ENCODE measurements at regions of chr10 and their contacts with region 1.

Region 1: GRCh38 chr10:80924063-80924952 is 386.6 kb downstream of the SH2D4B start:
- DNase-seq: peak; percentile 2 to 77
- H3K4me3 ChIP-seq: no peak overlapping the region
- H3K27ac ChIP-seq: no peak overlapping the region
- H3K4me1 ChIP-seq: peaks cover 0 to 10% (median 5%) of the 10 kb centered on the region in 4 experiments; a peak in 5 of 7 replicates
- H3K27me3 ChIP-seq: no peaks in the 10 kb centered on the region
- CTCF ChIP-seq: peak; percentile 33 to 73 (median 73)
- EP300 ChIP-seq: no peak
- POLR2A ChIP-seq: no peak
- RAD21 ChIP-seq: peak; percentile 74 to 79

Region 2: GRCh38 chr10:80699602-80700039 is 224.7 kb before region 1 on chr10:
- CTCF ChIA-PET with region 1: interaction called, 73 read pairs
- POLR2A ChIA-PET with region 1: no interaction called
- DNase-seq: peak; percentile 73 to 96
- H3K4me3 ChIP-seq: no peak overlapping the region
- H3K27ac ChIP-seq: no peak overlapping the region
- H3K4me1 ChIP-seq: no peaks in the 10 kb centered on the region; a peak in 1 of 7 replicates
- H3K27me3 ChIP-seq: no peaks in the 10 kb centered on the region
- CTCF ChIP-seq: peak; percentile 93 to 96 (median 94)
- EP300 ChIP-seq: no peak
- POLR2A ChIP-seq: no peak
- RAD21 ChIP-seq: peak; percentile 95 to 97

Region 3: DNA sequence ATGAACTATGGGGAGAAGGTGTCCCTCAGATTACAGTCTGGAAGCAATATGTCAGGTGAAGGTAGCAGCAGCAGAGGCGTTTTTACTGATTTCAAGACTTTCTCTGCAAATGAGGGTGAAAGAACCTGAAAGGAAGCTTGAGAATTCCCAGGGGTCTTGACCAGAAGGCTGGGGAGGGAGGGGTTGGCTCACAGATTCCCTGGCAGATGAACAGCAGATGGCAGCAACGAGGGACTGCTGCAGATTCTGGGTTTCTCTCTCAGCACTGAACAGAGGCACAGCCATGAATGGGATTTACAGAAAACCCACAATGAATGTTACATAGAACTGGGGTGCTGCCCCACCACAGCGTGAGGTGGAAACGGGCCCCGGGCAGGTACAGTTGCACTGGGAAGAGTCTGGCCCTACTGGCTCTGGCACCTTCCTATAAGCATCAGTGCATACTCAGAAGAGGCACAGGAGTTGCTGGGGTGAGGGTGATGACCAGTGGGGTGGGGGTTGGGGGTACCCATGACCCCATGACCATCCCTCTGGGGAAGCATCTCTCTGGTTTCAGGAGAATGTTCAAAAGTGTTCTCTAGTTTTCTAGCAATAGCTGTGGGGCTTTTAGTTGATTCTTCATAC is 68.8 kb before region 1 on chr10:
- CTCF ChIA-PET with region 1: interaction called, 85 read pairs
- POLR2A ChIA-PET with region 1: interaction called, 3 read pairs
- DNase-seq: peak; percentile 53 to 77
- H3K4me3 ChIP-seq: no peak overlapping the region
- H3K27ac ChIP-seq: no peak overlapping the region
- H3K4me1 ChIP-seq: no peaks in the 10 kb centered on the region; a peak in 3 of 7 replicates
- H3K27me3 ChIP-seq: no peaks in the 10 kb centered on the region
- CTCF ChIP-seq: peak; percentile 78 to 83 (median 78)
- EP300 ChIP-seq: no peak
- POLR2A ChIP-seq: no peak
- RAD21 ChIP-seq: peak; percentile 74 to 80

Region 4: DNA sequence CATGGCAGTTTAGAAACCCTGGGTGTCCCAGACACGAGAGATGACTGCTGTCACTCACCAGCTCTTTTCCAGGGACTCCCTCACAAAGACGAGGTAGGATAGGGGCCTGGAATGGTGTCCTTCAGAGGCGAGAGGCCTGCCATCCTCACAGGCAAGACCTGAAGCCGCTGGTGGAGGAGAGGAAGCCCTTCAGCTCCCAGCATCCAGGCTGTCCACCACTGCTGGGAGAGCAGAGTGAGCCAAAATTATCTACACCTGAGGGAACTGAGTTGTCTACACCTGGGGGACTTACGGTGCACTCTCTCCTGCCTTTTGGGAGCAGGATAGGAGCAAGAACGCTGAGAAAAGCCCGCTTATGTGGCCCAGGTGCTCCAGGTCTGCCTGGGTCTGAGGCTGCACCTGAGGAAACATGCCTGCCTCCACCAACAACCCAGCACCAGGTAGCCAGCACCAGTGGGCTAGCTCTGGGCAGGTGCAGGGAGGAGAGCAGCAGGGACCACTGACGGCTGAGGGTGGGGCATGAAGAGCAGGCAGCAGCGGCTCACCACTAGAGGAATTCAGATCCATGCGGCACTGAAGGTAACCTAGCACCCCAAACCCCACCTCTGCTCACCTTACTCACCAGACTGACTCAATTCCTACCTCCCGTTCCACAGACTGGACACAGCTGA is 29.4 kb before region 1 on chr10:
- CTCF ChIA-PET with region 1: interaction called, 38 read pairs
- POLR2A ChIA-PET with region 1: interaction called, 3 read pairs
- DNase-seq: peak in 1 of 2 experiments; percentile 71
- H3K4me3 ChIP-seq: peak overlapping the region in 3 of 4 experiments; percentile 0 to 31 (median 11); a peak in 4 of 8 replicates
- H3K27ac ChIP-seq: no peak overlapping the region
- H3K4me1 ChIP-seq: peaks cover 9 to 18% (median 12%) of the 10 kb centered on the region in 4 experiments
- H3K27me3 ChIP-seq: peaks cover 11 to 58% (median 42%) of the 10 kb centered on the region in 4 experiments
- CTCF ChIP-seq: no peak
- EP300 ChIP-seq: no peak
- POLR2A ChIP-seq: no peak
- RAD21 ChIP-seq: no peak

Region 5: GRCh38 chr10:80909254-80909653 is 15.1 kb before region 1 on chr10:
- CTCF ChIA-PET with region 1: interaction called, 62 read pairs
- POLR2A ChIA-PET with region 1: no interaction called
- DNase-seq: no peak
- H3K4me3 ChIP-seq: no peak overlapping the region
- H3K27ac ChIP-seq: no peak overlapping the region
- H3K4me1 ChIP-seq: no peaks in the 10 kb centered on the region
- H3K27me3 ChIP-seq: no peaks in the 10 kb centered on the region
- CTCF ChIP-seq: no peak
- EP300 ChIP-seq: no peak
- POLR2A ChIP-seq: no peak
- RAD21 ChIP-seq: no peak

Region 6: DNA sequence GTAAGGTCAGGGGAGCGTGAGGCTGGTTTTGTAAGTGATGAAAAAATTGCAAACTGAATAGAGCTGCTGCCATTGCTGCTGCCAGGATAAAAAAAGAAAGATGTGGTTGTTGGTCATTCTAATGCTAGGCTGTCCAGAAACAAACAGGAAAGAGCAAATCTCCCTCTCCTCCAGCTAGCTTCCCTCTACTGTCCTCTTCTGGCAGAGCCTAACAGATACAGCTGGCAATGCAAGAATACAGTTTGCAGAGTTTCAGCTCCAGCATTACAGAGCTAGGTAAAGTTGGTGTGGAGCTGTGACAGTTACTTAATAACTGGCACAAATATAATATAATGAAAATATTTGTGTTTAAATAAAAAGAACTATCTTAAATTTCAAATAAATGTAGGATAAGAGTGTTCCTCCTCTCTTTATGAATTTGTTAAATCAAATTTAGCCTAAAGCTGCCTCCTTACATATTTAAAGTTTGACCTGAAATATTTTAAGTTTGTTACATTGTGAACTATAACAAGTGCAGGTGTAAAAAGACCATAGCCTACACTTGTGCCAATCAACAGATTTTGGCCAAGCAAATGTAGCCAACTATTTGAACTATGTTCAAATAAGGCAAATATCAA is 21.1 kb after region 1 on chr10:
- CTCF ChIA-PET with region 1: interaction called, 43 read pairs
- POLR2A ChIA-PET with region 1: no interaction called
- DNase-seq: peak in 1 of 2 experiments; percentile 10
- H3K4me3 ChIP-seq: no peak overlapping the region
- H3K27ac ChIP-seq: no peak overlapping the region
- H3K4me1 ChIP-seq: peaks cover 0 to 5% (median 0%) of the 10 kb centered on the region in 4 experiments; a peak in 1 of 7 replicates
- H3K27me3 ChIP-seq: no peaks in the 10 kb centered on the region
- CTCF ChIP-seq: peak in 2 of 3 experiments; percentile 96 to 97; a peak in 3 of 4 replicates
- EP300 ChIP-seq: no peak
- POLR2A ChIP-seq: no peak
- RAD21 ChIP-seq: peak; percentile 95 to 98

Region 7: DNA sequence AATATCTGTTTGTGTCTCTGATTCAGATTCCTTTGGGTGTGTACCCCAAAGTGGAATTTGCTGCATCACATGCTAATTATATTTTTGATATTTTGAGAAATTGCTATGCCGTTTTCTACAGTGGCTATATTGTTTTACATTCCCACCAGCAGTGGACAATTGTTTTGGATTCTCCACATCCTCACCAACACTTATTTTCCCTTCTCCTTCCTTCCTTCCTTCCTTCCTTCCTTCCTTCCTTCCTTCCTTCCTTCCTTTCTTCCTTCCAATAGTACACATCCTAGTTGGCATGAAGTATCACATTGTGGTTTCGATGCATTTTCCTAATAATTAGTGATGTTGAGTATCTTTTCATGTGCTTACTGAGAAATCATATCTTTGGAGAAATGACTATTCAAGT is 148.8 kb after region 1 on chr10:
- CTCF ChIA-PET with region 1: no interaction called
- POLR2A ChIA-PET with region 1: no interaction called
- DNase-seq: no peak
- H3K4me3 ChIP-seq: no peak overlapping the region
- H3K27ac ChIP-seq: no peak overlapping the region
- H3K4me1 ChIP-seq: no peaks in the 10 kb centered on the region
- H3K27me3 ChIP-seq: no peaks in the 10 kb centered on the region
- CTCF ChIP-seq: no peak
- EP300 ChIP-seq: no peak
- POLR2A ChIP-seq: no peak
- RAD21 ChIP-seq: no peak

Measured in H1 (cell line).